ENCODE measurements at regions of chr7 and their contacts with region 1.

Region 1: DNA sequence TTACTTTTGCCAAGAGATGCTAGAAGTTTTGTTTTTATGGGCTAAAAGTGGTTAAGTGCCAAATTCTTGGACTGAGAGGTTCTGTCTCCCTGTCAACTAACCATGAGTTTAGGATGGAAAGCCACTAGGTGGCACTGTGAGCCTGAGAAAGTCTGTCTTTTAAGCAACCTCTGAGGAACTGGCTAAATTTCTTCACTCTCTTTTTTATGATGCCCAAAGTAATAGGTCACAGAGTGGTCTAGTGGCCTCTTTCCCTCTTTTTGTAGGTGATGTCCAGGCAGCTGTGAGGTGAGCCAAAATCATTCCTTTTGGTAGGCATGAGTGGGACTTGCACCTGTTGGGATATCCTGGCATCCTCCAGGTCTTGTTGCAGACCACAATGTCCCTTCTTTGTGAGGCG is 56.8 kb downstream of the SND1 start:
- DNase-seq: peak; percentile 72
- H3K4me3 ChIP-seq: no peak overlapping the region
- H3K27ac ChIP-seq: no peak overlapping the region
- H3K4me1 ChIP-seq: no peaks in the 10 kb centered on the region
- H3K27me3 ChIP-seq: no peaks in the 10 kb centered on the region
- CTCF ChIP-seq: peak in 3 of 4 experiments; percentile 73 to 78 (median 74)
- POLR2A ChIP-seq: no peak

Region 2: DNA sequence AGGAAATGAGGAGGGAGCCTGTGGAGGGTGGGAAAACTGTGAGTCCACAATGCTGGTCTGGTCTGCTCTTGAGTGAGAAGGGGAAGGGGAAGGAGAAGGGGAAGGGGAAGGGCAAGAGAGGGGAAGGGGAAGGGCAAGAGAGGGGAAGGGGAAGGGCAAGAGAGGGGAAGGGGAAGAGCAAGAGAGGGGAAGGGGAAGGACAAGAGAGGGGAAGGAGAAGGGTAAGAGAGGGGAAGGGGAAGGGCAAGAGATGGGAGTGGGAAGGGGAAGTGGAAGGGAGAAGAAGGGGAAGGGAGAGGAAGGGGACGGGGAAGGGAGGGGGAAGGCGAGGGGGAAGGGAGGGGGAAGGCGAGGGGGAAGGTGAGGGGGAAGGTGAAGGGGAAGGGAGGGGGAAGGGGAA is 669.2 kb before region 1 on chr7:
- intact Hi-C with region 1: no loop called
- DNase-seq: no peak
- H3K4me3 ChIP-seq: no peak overlapping the region
- H3K27ac ChIP-seq: no peak overlapping the region
- H3K4me1 ChIP-seq: no peaks in the 10 kb centered on the region
- H3K27me3 ChIP-seq: no peaks in the 10 kb centered on the region
- CTCF ChIP-seq: no peak
- POLR2A ChIP-seq: no peak

Region 3: GRCh38 chr7:127514499-127514898 is 194.3 kb before region 1 on chr7:
- intact Hi-C with region 1: no loop called
- DNase-seq: peak; percentile 5
- H3K4me3 ChIP-seq: no peak overlapping the region
- H3K27ac ChIP-seq: no peak overlapping the region
- H3K4me1 ChIP-seq: no peaks in the 10 kb centered on the region
- H3K27me3 ChIP-seq: no peaks in the 10 kb centered on the region
- CTCF ChIP-seq: peak in 2 of 4 experiments; percentile 39 to 47
- POLR2A ChIP-seq: no peak

Region 4: GRCh38 chr7:127733986-127734385 is 25.2 kb after region 1 on chr7:
- intact Hi-C with region 1: no loop called
- DNase-seq: no peak
- H3K4me3 ChIP-seq: no peak overlapping the region
- H3K27ac ChIP-seq: no peak overlapping the region
- H3K4me1 ChIP-seq: peaks cover 6% of the 10 kb centered on the region
- H3K27me3 ChIP-seq: no peaks in the 10 kb centered on the region
- CTCF ChIP-seq: no peak
- POLR2A ChIP-seq: no peak

Region 5: DNA sequence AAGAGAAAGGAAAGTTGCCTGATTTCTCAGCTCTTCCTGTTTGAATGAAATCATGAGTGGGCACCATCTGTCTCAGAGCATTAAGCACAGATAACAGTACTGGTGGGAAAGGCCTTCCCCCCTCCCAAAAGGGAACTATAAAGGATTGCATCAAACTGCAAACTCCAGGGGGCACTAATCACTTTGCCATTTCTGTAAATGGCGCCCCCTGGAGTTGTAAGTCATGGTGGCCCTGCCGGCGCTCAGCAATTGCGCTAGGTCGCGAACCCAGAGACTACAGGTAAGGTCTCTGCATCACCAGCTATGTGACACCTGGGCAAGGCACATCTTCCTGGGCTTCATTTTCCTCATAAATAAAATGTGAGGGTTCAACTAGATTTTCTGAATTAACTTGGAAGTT is 311.4 kb after region 1 on chr7:
- intact Hi-C with region 1: loop called (anchors 10 kb)
- DNase-seq: no peak
- H3K4me3 ChIP-seq: no peak overlapping the region
- H3K27ac ChIP-seq: no peak overlapping the region
- H3K4me1 ChIP-seq: no peaks in the 10 kb centered on the region
- H3K27me3 ChIP-seq: no peaks in the 10 kb centered on the region
- CTCF ChIP-seq: no peak
- POLR2A ChIP-seq: no peak

Region 6: GRCh38 chr7:128135515-128136214 is 426.9 kb after region 1 on chr7:
- intact Hi-C with region 1: loop called (anchors 5 kb)
- DNase-seq: peak; percentile 13
- H3K4me3 ChIP-seq: peak overlapping the region; percentile 31 to 39
- H3K27ac ChIP-seq: no peak overlapping the region
- H3K4me1 ChIP-seq: peaks cover 3% of the 10 kb centered on the region
- H3K27me3 ChIP-seq: peaks cover 3% of the 10 kb centered on the region
- CTCF ChIP-seq: peak; percentile 80 to 94 (median 87)
- POLR2A ChIP-seq: no peak

Region 7: DNA sequence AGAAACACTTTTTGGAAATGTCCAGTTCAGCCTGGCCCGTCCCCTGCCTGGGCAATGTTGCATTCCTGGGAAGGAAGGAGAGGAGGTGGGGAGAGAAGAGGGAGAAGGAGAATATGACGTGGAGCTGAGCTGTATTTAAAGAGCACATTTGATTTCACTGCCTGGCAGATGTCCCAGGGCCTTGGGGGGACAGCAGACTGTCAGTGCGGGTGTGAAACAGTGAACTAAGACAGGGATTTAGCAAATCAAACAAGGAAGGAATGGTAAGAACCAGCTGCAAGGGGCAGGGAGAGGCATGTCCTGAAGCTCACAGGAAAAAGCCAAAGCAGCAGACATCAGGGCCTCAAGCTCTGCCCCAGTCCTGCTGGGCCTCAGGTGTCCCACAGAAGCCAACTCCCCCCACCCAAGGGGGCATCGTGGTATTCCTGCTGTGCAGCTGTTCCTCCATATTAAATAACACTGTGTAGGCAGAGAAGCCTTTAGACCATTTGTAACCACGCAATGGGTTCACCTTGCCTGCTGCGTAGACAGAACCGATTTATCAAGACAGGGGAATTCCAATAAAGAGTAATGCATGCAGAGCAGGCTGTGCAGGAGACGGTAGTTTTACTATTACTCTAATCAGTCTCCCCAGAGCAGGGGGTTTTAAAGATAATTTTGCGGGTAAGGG is 550.5 kb after region 1 on chr7:
- intact Hi-C with region 1: no loop called
- DNase-seq: peak; percentile 41
- H3K4me3 ChIP-seq: no peak overlapping the region
- H3K27ac ChIP-seq: peak overlapping the region in 1 of 2 donors; percentile 29
- H3K4me1 ChIP-seq: peaks cover 4% of the 10 kb centered on the region
- H3K27me3 ChIP-seq: no peaks in the 10 kb centered on the region
- CTCF ChIP-seq: no peak
- POLR2A ChIP-seq: no peak

Measured in prostate gland (tissue), 2 donors.